Sigmoid colon (tissue), 7 donors: ENCODE measurements at regions of chr18 and their contacts with region 1.

Region 1: DNA sequence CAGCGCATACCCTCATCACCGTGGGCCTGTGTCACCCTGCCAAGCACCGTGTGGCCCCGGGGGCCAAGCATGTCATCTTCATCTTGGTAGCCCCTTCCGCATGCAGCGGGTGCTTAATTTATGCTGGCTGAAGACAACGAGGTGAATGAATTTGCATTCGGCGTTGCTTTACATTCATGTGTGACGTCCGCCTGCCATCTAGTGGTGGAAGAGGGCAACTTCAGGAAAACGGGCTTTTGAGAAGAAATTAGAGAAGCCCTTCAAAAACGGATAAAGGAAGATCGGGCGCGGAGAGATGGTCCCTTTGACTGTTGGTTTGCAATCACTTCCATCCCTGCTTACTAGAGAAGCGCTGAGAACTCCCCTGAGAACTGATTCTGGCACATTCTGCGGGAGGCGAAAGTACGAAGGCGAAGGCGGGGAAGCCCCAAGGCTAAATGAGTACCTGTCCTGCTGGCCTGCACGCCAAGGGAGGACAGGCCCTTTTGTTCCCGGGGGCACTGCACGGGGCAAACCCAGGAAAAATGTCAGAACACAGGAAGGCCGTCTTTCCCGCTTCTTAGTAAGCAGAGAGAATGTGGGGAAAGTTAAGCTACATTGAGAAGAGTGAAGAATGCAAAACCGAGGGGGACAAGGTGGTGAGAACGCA is 145.9 kb downstream of the ZNF516 start:
- DNase-seq: peak; percentile 85
- H3K4me3 ChIP-seq: peak overlapping the region in 1 of 4 donors; percentile 13
- H3K27ac ChIP-seq: no peak overlapping the region
- H3K4me1 ChIP-seq: peaks cover 2 to 29% (median 28%) of the 10 kb centered on the region in 4 donors
- H3K27me3 ChIP-seq: no peaks in the 10 kb centered on the region
- CTCF ChIP-seq: peak; percentile 67 to 90 (median 84)
- EP300 ChIP-seq: no peak
- POLR2A ChIP-seq: no peak

Region 2: DNA sequence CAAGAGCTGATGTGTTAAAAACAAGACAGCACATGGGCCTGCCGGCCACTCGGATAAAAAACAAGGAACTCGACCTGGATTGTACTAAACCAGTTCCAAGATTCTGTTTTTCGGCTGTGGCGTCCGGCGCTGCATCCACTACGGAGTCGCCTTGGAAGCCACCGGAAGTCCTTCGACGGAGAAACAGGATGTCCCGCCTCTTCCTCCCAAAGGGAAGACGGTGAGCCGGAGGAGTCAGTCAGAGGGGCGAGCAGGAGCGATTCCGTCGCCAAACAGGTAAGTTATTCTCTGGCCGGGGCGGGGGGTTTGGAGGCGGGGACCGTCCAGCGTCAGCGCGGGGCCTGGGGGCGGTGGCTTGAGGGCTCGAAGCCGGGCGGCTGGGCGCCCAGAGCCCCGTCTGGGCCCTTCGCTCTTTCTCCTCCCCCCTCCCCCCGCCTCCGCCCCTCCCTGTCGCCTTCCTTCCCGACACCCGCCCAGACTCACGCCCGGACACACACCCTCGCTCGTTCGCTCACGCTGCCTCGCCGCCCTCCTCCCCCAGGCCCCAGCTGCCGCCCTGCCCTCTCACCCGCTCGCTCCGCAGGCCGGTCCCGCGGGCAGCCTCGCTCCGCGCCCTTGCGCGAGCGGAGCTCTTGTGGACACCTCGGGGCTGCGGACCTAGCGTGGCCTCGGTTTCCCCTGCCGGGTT is 1751.4 kb before region 1 on chr18 and contains the start of gene ZNF407:
- intact Hi-C with region 1: loop called (anchors 2 kb)
- DNase-seq: peak; percentile 93
- H3K4me3 ChIP-seq: peak within 1 kb of the TSS; percentile 56 to 97 (median 78)
- H3K27ac ChIP-seq: peak within 1 kb of the TSS; percentile 92 to 99 (median 96)
- H3K4me1 ChIP-seq: peaks cover 0 to 41% (median 30%) of the 10 kb centered on the region in 4 donors
- H3K27me3 ChIP-seq: no peaks in the 10 kb centered on the region
- CTCF ChIP-seq: no peak
- EP300 ChIP-seq: no peak
- POLR2A ChIP-seq: peak in 1 of 2 donors; percentile 21
- total RNA-seq, gene ZNF407: 16.3 to 19.8 (median 18.1) TPM

Region 3: GRCh38 chr18:75478996-75479880 is 870.0 kb before region 1 on chr18:
- intact Hi-C with region 1: loop called (anchors 10 kb)
- DNase-seq: no peak
- H3K4me3 ChIP-seq: no peak overlapping the region
- H3K27ac ChIP-seq: no peak overlapping the region
- H3K4me1 ChIP-seq: peaks cover 0 to 22% (median 5%) of the 10 kb centered on the region in 4 donors
- H3K27me3 ChIP-seq: no peaks in the 10 kb centered on the region
- CTCF ChIP-seq: peak in 2 of 4 experiments; percentile 52 to 53
- EP300 ChIP-seq: no peak
- POLR2A ChIP-seq: no peak

Region 4: GRCh38 chr18:75874401-75875089 is 474.6 kb before region 1 on chr18:
- intact Hi-C with region 1: loop called (anchors 5 kb)
- DNase-seq: no peak
- H3K4me3 ChIP-seq: peak overlapping the region in 3 of 4 donors; percentile 18 to 28 (median 25)
- H3K27ac ChIP-seq: peak overlapping the region; percentile 75 to 89 (median 84)
- H3K4me1 ChIP-seq: peaks cover 0 to 59% (median 48%) of the 10 kb centered on the region in 4 donors
- H3K27me3 ChIP-seq: no peaks in the 10 kb centered on the region
- CTCF ChIP-seq: no peak
- EP300 ChIP-seq: no peak
- POLR2A ChIP-seq: no peak

Region 5: DNA sequence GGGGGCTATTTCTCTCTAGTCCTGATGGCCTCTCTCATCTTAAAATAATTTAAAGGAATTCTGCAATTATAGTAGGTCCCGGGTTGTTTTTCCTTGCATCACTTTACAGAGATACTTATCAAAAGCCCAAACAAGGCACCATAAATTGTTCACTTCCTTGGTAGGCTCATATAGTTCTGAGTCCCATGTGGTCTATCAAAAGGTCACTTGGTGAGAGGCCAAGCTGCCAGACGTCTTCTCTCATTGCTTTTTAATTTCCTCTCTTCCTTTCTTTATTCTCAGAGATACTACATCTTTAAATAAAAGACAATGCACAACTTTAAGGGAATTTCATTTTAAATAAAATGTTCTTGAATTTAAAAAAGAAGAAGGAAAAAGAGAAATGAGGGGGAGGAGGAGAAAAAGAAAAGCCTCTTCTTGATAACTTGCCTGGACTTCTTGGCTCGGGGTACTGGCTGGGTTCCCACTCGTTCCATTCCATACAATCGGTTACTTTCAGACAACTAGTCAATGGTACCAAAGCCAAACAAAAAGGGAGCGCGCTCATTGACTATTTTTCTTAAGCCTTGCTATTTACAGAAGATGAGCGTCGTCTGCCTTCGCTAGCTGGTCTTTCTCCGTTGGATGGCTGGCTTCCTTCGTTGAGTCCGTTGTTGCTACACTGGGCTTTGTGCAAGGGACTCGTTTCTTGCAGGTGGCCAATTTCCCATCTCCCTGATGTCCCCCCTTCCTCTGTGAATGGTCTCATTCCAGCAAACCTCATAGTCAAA is 114.7 kb before region 1 on chr18:
- intact Hi-C with region 1: no loop called
- DNase-seq: no peak
- H3K4me3 ChIP-seq: no peak overlapping the region
- H3K27ac ChIP-seq: no peak overlapping the region
- H3K4me1 ChIP-seq: no peaks in the 10 kb centered on the region
- H3K27me3 ChIP-seq: no peaks in the 10 kb centered on the region
- CTCF ChIP-seq: no peak
- EP300 ChIP-seq: no peak
- POLR2A ChIP-seq: no peak

Region 6: GRCh38 chr18:76246590-76246989 is 102.6 kb before region 1 on chr18:
- intact Hi-C with region 1: no loop called
- DNase-seq: no peak
- H3K4me3 ChIP-seq: no peak overlapping the region
- H3K27ac ChIP-seq: no peak overlapping the region
- H3K4me1 ChIP-seq: no peaks in the 10 kb centered on the region
- H3K27me3 ChIP-seq: no peaks in the 10 kb centered on the region
- CTCF ChIP-seq: no peak
- EP300 ChIP-seq: no peak
- POLR2A ChIP-seq: no peak

Region 7: GRCh38 chr18:76259096-76259495 is 90.1 kb before region 1 on chr18:
- intact Hi-C with region 1: loop called (anchors 5 kb)
- DNase-seq: no peak
- H3K4me3 ChIP-seq: no peak overlapping the region
- H3K27ac ChIP-seq: peak overlapping the region in 2 of 4 donors; percentile 28 to 54
- H3K4me1 ChIP-seq: peaks cover 0 to 41% (median 14%) of the 10 kb centered on the region in 4 donors
- H3K27me3 ChIP-seq: no peaks in the 10 kb centered on the region
- CTCF ChIP-seq: no peak
- EP300 ChIP-seq: no peak
- POLR2A ChIP-seq: no peak

Region 8: DNA sequence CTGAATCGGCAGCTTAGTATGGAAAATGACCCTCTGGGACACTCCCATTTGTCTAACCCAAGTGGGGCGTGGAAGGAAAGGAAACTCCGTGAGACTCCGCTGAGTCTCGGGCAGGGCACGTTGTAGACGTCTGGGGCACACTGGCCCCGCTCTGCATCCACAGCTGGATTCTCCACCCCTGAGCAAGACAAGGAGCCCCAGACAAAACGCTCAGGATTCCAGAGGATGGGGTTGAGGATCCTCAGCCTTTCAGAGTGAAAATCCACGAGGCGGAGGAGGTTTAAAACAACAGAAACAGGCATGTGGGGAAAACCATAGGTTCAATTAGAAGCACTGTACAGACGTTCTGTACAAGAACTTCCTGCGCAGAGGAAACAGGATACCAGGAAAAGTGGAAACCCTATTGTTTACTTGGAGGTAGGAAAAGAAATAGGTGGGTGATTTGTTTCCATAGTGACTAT is 348.3 kb after region 1 on chr18:
- intact Hi-C with region 1: no loop called
- DNase-seq: no peak
- H3K4me3 ChIP-seq: peak overlapping the region in 2 of 4 donors; percentile 7 to 14
- H3K27ac ChIP-seq: peak overlapping the region in 2 of 4 donors; percentile 6 to 20
- H3K4me1 ChIP-seq: peaks cover 0 to 16% (median 9%) of the 10 kb centered on the region in 4 donors
- H3K27me3 ChIP-seq: peaks cover 0 to 7% (median 0%) of the 10 kb centered on the region in 3 donors
- CTCF ChIP-seq: no peak
- EP300 ChIP-seq: no peak
- POLR2A ChIP-seq: no peak